ENCODE measurements at regions of chr16 and their contacts with region 1.

Region 1: GRCh38 chr16:88811769-88812512 is at the start of gene APRT:
- DNase-seq: peak; percentile 93 to 99 (median 98)
- ATAC-seq: peak; percentile 83 to 88
- H3K4me3 Mint-ChIP-seq: peak within 1 kb of the TSS; percentile 94 to 98 (median 96)
- H3K27ac Mint-ChIP-seq: peak within 1 kb of the TSS; percentile 81 to 99 (median 97)
- H3K4me1 Mint-ChIP-seq: peaks cover 3 to 26% (median 22%) of the 10 kb centered on the region in 4 donors
- H3K27me3 Mint-ChIP-seq: no peaks in the 10 kb centered on the region
- polyA plus RNA-seq, gene APRT: 428 to 492 (median 431) TPM

Region 2: DNA sequence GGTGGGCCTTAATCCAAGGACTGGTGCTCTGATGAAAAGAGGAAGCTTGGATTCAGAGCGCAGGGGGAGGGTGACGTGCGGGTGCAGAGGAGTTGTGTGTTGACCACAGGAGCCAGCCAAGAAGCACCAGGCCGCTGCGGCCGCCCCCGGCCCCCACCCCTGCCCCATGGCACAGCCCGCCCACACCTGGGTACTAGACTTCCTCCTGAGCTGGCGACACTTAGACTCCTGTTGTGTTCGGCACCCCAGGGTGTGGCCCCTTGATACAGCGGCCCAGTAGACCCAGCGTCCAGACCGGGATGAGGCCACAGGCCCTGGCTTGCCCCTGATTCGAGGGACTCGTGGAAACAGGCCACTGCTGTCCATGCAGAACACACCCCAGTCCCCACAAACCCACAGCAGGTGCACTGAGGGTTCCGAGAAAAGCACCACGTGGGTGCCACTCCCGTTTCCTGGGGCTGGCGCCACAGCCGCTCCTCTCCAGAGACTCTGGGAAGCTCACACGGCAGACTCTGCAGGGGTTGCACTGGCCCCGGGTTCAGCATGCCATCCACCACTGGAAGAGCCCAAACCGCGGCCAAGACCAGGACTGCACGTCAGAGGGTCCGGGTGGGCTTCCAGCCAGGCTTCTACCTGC is 119.9 kb before region 1 on chr16:
- POLR2A ChIA-PET with region 1: no interaction called
- DNase-seq: no peak
- ATAC-seq: peak; percentile 53 to 65
- H3K4me3 Mint-ChIP-seq: peak overlapping the region; percentile 32 to 81 (median 64)
- H3K27ac Mint-ChIP-seq: peak overlapping the region in 9 of 10 donors; percentile 79 to 93 (median 88)
- H3K4me1 Mint-ChIP-seq: peaks cover 11 to 52% (median 40%) of the 10 kb centered on the region in 4 donors
- H3K27me3 Mint-ChIP-seq: no peaks in the 10 kb centered on the region

Region 3: DNA sequence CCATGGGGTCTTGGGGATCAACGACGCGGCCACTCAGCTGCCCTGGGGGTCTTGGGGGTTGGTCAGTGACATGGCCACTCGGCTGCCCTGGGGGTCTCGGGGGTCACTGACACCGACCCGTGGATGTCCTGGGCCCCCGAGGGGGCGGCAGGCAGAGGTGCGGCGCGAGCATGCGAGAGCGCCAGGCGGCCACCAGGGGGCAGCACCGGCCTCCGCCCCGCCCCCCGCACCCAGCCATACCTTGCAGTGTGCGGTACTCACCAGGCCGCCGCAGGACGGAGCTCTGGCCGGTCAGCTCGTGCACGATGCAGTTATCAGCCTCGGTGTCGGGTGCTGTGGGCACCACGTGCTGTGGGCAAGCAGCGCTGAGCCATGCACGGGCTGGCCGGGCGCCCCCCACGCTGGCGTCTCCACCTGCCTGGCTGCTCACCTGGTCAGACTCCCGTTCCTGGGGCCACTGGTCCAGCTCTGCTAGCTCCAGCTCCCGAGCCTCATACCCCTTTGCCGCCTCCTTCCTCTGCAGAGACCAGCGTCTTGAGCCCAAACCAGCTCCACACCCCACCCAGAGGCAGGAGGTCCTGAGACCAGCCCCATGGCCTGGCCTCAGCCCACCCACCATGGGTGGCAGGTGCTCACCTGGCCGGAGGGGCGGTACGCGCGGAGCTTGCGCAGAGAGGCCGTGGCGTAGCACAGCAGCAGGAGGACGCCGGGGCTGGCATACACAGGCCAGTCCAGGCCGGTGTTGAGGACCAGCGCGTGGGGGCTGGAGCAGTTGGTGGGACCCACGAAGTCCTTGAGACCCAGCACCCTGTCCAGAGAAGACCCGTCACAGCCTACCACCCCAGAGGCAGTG is 74.4 kb before region 1 on chr16:
- POLR2A ChIA-PET with region 1: interaction called, 16 read pairs
- DNase-seq: peak; percentile 56 to 90 (median 72)
- ATAC-seq: peak; percentile 93 to 98
- H3K4me3 Mint-ChIP-seq: no peak overlapping the region
- H3K27ac Mint-ChIP-seq: no peak overlapping the region
- H3K4me1 Mint-ChIP-seq: peaks cover 0 to 3% (median under 1%) of the 10 kb centered on the region in 4 donors
- H3K27me3 Mint-ChIP-seq: no peaks in the 10 kb centered on the region

Region 4: DNA sequence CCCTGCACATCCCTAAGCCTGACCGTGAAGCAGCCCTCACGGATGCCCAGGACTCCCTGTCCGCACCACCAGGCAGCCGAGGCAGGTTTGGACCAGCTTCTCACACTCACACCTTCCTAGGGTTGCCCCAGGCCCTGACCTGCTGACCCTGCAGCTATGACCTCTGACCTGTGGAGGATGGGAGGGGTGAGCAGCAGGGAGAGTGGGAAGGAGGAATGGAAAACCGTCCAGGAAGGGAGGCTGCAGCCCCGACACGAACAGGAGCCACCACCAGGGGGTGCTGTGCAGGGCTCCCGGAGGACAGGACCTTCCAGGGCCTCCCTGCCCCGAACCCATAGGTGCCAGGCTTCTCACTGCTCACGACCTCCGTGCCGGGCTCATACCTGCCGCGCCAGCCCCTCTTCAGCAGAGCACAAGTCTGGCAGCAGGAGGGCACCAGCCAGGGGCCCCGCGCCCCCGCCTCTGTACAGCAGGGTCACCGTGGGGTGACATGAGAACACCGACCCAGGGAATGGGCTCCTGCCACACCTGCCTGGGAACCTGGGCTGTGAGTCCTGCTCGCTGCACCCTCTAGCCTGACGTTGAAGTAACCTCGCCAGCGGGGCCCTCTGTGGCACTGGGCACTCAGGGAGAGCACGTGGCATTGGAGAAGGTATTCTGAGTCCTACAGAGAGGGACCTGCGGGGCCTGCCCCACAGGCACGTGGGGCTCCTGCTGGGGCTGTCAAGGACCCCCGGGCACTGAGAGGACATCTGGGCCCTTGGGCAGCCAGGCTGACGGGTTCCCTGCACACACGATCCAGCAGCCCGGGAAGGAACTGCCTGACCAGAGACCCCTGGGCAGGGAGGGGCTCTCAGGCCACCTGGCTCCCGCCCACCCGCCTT is 68.0 kb before region 1 on chr16:
- POLR2A ChIA-PET with region 1: interaction called, 11 read pairs
- DNase-seq: peak; percentile 52 to 86 (median 72)
- ATAC-seq: peak; percentile 46 to 61
- H3K4me3 Mint-ChIP-seq: peak overlapping the region in 5 of 10 donors; percentile 10 to 62 (median 34)
- H3K27ac Mint-ChIP-seq: peak overlapping the region in 4 of 10 donors; percentile 11 to 59 (median 20)
- H3K4me1 Mint-ChIP-seq: peaks cover 10 to 38% (median 32%) of the 10 kb centered on the region in 4 donors
- H3K27me3 Mint-ChIP-seq: no peaks in the 10 kb centered on the region

Region 5: DNA sequence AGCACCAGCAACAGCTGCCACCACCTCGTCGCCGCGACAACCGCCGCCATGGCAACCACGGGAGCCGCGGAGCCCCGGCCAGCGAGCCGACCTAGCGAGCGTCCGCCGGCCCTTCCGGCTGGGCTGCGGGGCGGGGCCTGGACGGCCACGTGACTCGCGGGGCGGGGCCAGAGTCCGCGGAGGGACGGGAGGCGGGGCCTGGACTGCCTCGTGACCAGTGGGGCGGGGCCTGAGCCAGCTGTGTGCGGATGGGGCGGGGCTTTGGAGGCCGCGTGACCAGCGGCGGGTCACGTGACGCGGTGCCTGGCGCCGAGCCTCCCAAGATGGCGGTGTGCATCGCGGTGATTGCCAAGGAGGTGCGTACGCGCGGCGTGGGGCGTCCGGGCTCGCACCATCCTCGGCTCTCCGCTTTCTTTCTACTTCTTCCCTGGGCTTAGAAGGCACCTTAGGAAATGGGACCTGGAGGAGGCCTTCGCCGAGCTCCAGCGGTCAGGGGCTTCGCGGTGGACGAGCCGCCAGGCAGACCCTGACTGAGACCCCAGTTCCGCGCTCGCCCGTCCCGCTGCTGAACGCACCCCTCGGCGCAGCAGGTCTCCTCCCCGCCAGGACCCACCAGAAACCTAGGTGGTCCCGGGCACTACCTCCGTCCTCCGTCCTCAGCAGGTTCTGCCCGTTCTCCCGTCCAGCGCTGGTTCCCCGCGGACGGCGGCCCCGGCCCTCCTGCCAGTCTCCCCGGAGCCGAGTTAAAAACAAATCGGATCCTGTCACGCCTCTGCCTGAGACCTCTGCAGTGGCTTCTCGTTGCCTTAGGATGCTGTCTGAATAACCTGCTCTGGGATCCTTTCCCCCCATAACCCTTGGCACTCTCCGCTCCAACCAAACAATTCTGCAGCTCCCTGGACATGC is 45.1 kb after region 1 on chr16 and contains the starts of genes GALNS and TRAPPC2L:
- POLR2A ChIA-PET with region 1: interaction called, 59 read pairs
- DNase-seq: peak; percentile 95 to 100 (median 98)
- ATAC-seq: peak; percentile 84 to 86
- H3K4me3 Mint-ChIP-seq: peak within 1 kb of the TSS; percentile 95 to 100 (median 98)
- H3K27ac Mint-ChIP-seq: peak within 1 kb of the TSS; percentile 93 to 99 (median 96)
- H3K4me1 Mint-ChIP-seq: peaks cover 23 to 48% (median 33%) of the 10 kb centered on the region in 4 donors
- H3K27me3 Mint-ChIP-seq: no peaks in the 10 kb centered on the region
- polyA plus RNA-seq, gene GALNS: 7.8 to 11.9 (median 11.8) TPM
- polyA plus RNA-seq, gene TRAPPC2L: 81.8 to 86.5 (median 82.1) TPM

Region 6: GRCh38 chr16:88886845-88887521 is 75.0 kb after region 1 on chr16:
- POLR2A ChIA-PET with region 1: no interaction called
- DNase-seq: no peak
- ATAC-seq: no peak
- H3K4me3 Mint-ChIP-seq: no peak overlapping the region
- H3K27ac Mint-ChIP-seq: no peak overlapping the region
- H3K4me1 Mint-ChIP-seq: peaks cover 0 to 6% (median 4%) of the 10 kb centered on the region in 4 donors
- H3K27me3 Mint-ChIP-seq: no peaks in the 10 kb centered on the region

Measured in naive thymus-derived CD8-positive, alpha-beta T cell (primary cell).